Activated CD4-positive, alpha-beta T cell treated with anti-CD3 and anti-CD28 coated beads for 36 hours (primary cell): ENCODE measurements at regions of chr3 and their contacts with region 1.

Region 1: GRCh38 chr3:167350245-167350862 is 29.7 kb downstream of the ZBBX start:
- DNase-seq: no peak
- ATAC-seq: no peak
- H3K4me3 Mint-ChIP-seq: no peak overlapping the region
- H3K27ac Mint-ChIP-seq: no peak overlapping the region
- H3K4me1 Mint-ChIP-seq: no peaks in the 10 kb centered on the region
- H3K27me3 Mint-ChIP-seq: peaks cover 5% of the 10 kb centered on the region

Region 2: GRCh38 chr3:165854696-165855095 is 1495.7 kb before region 1 on chr3:
- CTCF ChIA-PET with region 1: no interaction called
- POLR2A ChIA-PET with region 1: no interaction called
- intact Hi-C with region 1: loop called in 1 of 2 experiments (anchors 2 kb)
- DNase-seq: no peak
- ATAC-seq: no peak
- H3K4me3 Mint-ChIP-seq: no peak overlapping the region
- H3K27ac Mint-ChIP-seq: no peak overlapping the region
- H3K4me1 Mint-ChIP-seq: no peaks in the 10 kb centered on the region
- H3K27me3 Mint-ChIP-seq: no peaks in the 10 kb centered on the region

Region 3: GRCh38 chr3:166013073-166013679 is 1337.2 kb before region 1 on chr3:
- CTCF ChIA-PET with region 1: no interaction called
- POLR2A ChIA-PET with region 1: no interaction called
- intact Hi-C with region 1: loop called in 1 of 2 experiments (anchors 10 kb)
- DNase-seq: no peak
- ATAC-seq: no peak
- H3K4me3 Mint-ChIP-seq: no peak overlapping the region
- H3K27ac Mint-ChIP-seq: no peak overlapping the region
- H3K4me1 Mint-ChIP-seq: no peaks in the 10 kb centered on the region
- H3K27me3 Mint-ChIP-seq: no peaks in the 10 kb centered on the region

Region 4: GRCh38 chr3:166837535-166837934 is 512.8 kb before region 1 on chr3:
- CTCF ChIA-PET with region 1: no interaction called
- POLR2A ChIA-PET with region 1: no interaction called
- intact Hi-C with region 1: loop called in 1 of 2 experiments (anchors 10 kb)
- DNase-seq: peak; percentile 6
- ATAC-seq: peak; percentile 39
- H3K4me3 Mint-ChIP-seq: no peak overlapping the region
- H3K27ac Mint-ChIP-seq: no peak overlapping the region
- H3K4me1 Mint-ChIP-seq: no peaks in the 10 kb centered on the region
- H3K27me3 Mint-ChIP-seq: no peaks in the 10 kb centered on the region